ENCODE measurements at regions of chr5 and their contacts with region 1.

Region 1: GRCh38 chr5:67246108-67246507 is 49.5 kb upstream of the CD180 start:
- DNase-seq: peak; percentile 34
- CTCF ChIP-seq: peak; percentile 59

Region 2: DNA sequence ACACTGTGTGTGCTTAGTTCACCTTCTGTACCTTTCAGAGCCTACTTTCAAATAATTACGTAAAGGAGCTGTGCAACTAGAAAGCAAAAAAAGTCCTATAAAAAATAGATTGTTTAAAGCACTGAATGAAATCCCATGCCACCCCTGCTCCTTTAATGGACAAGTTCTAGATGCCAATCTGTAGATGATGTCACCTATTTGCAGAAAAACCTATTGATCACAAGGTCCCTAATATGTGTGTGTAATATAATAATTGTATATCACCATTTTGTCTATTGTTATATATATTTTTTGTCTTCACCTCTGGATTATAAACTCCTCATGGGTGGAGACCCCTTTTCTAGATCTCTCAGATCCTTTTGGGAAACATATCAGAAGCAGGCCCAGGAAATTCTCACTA is 11.9 kb before region 1 on chr5:
- CTCF ChIA-PET with region 1: interaction called, 11 read pairs
- POLR2A ChIA-PET with region 1: interaction called, 3 read pairs
- DNase-seq: no peak
- CTCF ChIP-seq: no peak

Region 3: DNA sequence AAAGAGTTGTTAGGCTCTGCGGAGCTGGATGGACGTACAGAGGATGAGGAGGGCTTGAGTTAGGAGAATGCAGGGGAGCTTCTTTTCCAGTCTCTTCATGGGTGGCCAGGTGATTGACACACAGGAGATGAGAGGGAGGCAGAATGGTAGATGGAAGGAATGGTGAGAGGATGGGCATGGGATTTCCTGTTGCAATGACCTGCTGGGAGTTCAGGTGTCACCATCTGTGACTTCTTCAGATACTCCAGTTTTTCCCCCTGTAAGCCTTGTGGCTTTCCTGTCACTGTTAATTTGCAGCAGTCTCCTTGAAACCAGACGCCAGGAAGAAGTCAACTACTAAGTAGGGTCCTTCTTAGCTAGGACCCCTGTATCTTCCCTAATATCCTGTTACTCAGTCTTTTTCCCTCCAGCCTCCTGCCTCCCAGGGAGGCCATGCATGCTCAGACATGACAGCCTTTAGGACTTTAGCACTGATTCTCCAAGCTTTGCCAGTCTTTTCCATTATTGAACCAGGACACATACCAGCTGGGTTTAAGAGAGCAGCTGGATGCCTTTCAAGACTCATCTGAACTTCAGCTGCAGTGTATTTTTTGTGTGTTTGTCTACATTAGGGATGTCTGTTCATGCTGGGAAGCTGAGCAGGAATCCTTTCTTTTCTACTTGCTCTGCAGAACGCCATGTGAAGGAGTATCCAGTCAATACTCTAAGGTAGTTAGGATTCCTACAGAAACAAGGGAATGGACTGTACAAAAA is 17.7 kb after region 1 on chr5:
- CTCF ChIA-PET with region 1: interaction called, 18 read pairs
- POLR2A ChIA-PET with region 1: no interaction called
- DNase-seq: no peak
- CTCF ChIP-seq: no peak

Region 4: DNA sequence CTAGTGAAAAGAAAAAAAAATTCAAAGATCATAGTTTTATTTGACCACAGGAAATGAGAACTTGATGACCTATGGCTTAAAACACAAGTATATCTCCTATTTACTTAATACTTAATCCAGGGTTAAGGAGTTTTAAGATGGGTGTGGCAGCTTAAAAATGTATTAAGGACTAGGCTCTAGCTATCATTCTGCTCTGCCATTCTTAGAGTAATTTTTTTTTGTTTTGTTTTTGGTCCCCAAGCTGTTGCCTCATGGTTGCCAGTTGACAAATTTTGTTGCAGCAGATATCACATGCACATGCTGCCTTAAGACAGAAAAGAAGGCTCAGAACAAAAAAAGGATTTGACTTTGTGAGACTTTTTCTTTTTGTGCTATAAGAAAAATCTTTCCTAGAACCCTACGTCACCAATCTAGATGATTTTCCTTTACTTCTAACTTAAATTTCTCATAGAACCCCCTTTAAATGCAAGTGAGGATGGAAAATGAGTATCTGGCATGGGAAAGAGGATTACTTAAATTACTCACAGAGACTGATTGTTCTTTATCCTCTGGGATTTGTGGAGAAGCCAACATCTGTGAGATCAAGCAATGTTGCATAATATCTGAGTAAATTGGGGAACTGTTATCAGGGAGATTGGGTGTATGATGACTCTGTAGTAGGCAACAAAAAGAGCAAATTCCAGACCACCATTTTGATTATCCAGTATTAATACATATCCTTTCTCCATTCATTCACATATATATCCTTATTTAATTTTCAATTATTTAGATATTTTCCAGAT is 315.2 kb after region 1 on chr5:
- CTCF ChIA-PET with region 1: no interaction called
- POLR2A ChIA-PET with region 1: no interaction called
- DNase-seq: no peak
- CTCF ChIP-seq: no peak

Region 5: GRCh38 chr5:68252673-68253623 is 1006.8 kb after region 1 on chr5:
- CTCF ChIA-PET with region 1: interaction called, 26 read pairs
- POLR2A ChIA-PET with region 1: interaction called, 3 read pairs
- DNase-seq: peak; percentile 49
- CTCF ChIP-seq: peak; percentile 74

Region 6: GRCh38 chr5:68261569-68262065 is 1015.5 kb after region 1 on chr5:
- CTCF ChIA-PET with region 1: interaction called, 16 read pairs
- POLR2A ChIA-PET with region 1: interaction called, 3 read pairs
- DNase-seq: no peak
- CTCF ChIP-seq: peak; percentile 31

Region 7: GRCh38 chr5:68272289-68272688 is 1026.2 kb after region 1 on chr5:
- CTCF ChIA-PET with region 1: interaction called, 25 read pairs
- POLR2A ChIA-PET with region 1: no interaction called
- DNase-seq: no peak
- CTCF ChIP-seq: peak; percentile 23

Measured in GM10248 (cell line).